WTC11 (cell line): ENCODE measurements at regions of chr7 and their contacts with region 1.

Region 1: DNA sequence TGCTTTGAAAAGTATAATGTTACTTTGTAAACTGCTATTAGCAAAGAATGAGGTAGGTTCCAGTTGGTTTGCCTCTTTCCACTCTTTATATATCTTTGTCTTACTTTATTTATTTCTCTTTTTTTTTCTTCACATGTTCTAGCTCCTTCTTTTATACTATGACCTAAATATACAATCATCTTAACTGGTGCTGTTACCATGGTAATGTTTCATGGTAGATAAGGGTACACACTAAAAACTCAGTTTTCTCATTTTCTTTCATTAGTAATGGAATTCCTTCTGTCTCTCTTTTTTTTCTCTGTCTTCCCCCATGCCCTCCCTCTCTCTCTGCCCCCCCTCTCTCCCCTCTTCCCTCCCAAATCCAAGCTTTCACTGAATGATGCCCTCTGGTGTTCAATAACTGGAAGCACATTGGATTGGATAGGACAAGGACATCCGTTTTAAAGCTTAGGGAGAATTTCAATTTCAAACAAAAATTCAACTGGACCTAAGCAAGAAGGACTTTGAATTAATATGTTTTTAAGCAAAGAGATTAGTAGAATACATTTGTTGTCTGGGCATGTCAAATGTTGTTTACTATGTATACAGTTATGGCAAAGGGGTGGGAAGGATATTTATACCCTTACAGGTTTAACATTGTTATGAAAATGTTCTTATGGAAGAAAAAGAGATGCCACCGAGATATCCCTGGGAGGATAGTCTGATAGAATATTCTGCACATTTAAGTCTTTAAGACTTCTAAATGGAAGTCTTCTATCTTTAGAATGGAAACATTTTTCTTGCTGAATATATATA is 6.0 kb downstream of the CHRM2 start:
- DNase-seq: no peak
- ATAC-seq: peak; percentile 17; the same call in 1 of the 2 replicates
- H3K4me3 Mint-ChIP-seq: no peak overlapping the region
- H3K27ac Mint-ChIP-seq: no peak overlapping the region
- H3K4me1 Mint-ChIP-seq: peaks cover 53% of the 10 kb centered on the region
- H3K27me3 Mint-ChIP-seq: peaks cover 49% of the 10 kb centered on the region
- CTCF ChIP-seq: peak; percentile 39; the same call in 1 of the 2 replicates

Region 2: GRCh38 chr7:136566491-136566890 is 307.9 kb before region 1 on chr7:
- CTCF ChIA-PET with region 1: no interaction called
- POLR2A ChIA-PET with region 1: interaction called, 13 read pairs
- DNase-seq: no peak
- ATAC-seq: no peak
- H3K4me3 Mint-ChIP-seq: no peak overlapping the region
- H3K27ac Mint-ChIP-seq: no peak overlapping the region
- H3K4me1 Mint-ChIP-seq: no peaks in the 10 kb centered on the region
- H3K27me3 Mint-ChIP-seq: peaks cover 12% of the 10 kb centered on the region
- CTCF ChIP-seq: no peak

Region 3: GRCh38 chr7:136709876-136710275 is 164.6 kb before region 1 on chr7:
- CTCF ChIA-PET with region 1: no interaction called
- POLR2A ChIA-PET with region 1: no interaction called
- DNase-seq: no peak
- ATAC-seq: no peak
- H3K4me3 Mint-ChIP-seq: no peak overlapping the region
- H3K27ac Mint-ChIP-seq: no peak overlapping the region
- H3K4me1 Mint-ChIP-seq: no peaks in the 10 kb centered on the region
- H3K27me3 Mint-ChIP-seq: no peaks in the 10 kb centered on the region
- CTCF ChIP-seq: no peak

Region 4: DNA sequence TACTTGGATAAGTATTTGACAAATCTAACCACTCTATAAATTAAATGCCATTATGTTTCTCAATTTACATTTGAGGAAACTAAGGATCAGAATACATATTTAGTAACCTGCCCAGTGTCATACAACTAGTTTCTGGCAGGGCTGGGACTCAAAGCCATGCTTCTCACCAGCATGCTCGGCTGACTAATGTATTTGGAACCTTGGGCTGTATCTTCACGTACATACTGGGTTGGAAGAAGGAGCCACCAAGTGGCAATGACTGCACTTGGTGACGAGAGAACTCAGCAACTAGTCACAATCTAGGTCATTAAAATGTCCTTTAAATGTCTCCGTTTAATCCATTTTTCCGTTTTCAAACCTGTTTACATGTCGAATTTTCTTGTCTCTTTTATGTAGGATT is 36.9 kb after region 1 on chr7:
- CTCF ChIA-PET with region 1: no interaction called
- POLR2A ChIA-PET with region 1: no interaction called
- DNase-seq: no peak
- ATAC-seq: peak; percentile 83
- H3K4me3 Mint-ChIP-seq: no peak overlapping the region
- H3K27ac Mint-ChIP-seq: no peak overlapping the region
- H3K4me1 Mint-ChIP-seq: peaks cover 4% of the 10 kb centered on the region
- H3K27me3 Mint-ChIP-seq: no peaks in the 10 kb centered on the region
- CTCF ChIP-seq: no peak